Left cardiac atrium (tissue), 4 donors: ENCODE measurements at regions of chr4 and their contacts with region 1.

Region 1: GRCh38 chr4:183098723-183099536 is at the start of gene WWC2:
- DNase-seq: peak; percentile 94
- ATAC-seq: peak; percentile 92 to 94
- total RNA-seq, gene WWC2: 31.5 to 32.3 TPM

Region 2: GRCh38 chr4:182736207-182736606 is 362.7 kb before region 1 on chr4:
- intact Hi-C with region 1: no loop called
- DNase-seq: no peak
- ATAC-seq: no peak

Region 3: DNA sequence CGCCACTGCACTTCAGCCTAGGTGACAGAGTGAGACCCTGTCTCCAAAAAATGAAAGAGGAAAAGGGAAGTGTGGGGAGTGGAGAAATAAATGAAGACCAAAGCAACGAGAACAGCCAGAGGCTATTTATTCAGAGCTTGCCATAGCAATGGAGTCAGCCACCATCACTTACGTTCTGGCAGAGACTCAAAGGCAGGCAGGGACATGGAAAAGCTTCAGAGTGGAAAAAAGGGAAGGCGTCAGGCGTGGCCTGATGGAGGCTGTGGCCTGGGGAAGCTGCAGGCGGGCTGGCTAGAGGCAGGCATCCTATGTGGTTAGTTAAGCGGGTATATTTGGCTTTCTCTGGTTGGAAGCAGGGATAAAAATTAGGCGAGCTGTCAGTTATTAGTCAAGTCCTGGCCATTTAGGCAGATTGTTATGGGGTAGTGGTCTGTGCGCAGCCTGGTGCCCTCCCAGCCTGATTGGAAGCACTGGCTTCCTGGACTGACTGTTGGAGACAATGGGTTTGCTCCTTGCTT is 255.1 kb before region 1 on chr4:
- intact Hi-C with region 1: no loop called
- DNase-seq: no peak
- ATAC-seq: no peak

Region 4: GRCh38 chr4:183241322-183241640 is 142.4 kb after region 1 on chr4:
- intact Hi-C with region 1: loop called in 1 of 2 experiments (anchors 5 kb)
- DNase-seq: no peak
- ATAC-seq: peak; percentile 23 to 87

Region 5: DNA sequence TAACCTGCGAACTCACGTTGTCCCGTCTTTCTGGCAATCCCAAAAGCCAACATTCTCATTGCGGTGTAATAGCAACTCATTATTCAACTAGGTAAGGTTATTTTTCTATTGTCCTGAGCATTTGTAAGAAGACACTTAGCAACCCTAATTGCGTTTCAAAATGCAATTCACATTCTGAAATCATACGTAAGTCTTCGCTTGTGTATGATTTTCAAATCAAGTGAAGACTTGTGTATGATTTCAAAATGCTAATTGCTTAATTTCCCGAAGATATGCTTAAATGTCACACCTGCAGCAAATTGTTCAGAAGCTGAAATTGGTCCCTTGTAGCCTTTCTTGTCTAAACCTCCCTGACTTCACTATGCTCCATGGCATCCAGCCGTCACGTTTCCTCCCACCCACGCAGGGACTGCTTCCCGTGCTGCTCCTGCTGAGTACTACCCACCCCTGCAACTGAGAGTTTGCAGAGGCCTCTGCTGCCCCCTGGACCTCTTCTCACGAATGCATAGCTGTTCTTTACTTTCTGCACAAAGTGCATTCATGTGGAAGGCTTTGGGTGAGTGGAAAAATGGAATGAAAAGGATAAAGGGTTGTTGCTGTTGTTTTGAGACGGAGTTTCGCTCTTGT is 264.1 kb after region 1 on chr4:
- intact Hi-C with region 1: no loop called
- DNase-seq: no peak
- ATAC-seq: no peak